ENCODE measurements at regions of chrX and their contacts with region 1.

Region 1: DNA sequence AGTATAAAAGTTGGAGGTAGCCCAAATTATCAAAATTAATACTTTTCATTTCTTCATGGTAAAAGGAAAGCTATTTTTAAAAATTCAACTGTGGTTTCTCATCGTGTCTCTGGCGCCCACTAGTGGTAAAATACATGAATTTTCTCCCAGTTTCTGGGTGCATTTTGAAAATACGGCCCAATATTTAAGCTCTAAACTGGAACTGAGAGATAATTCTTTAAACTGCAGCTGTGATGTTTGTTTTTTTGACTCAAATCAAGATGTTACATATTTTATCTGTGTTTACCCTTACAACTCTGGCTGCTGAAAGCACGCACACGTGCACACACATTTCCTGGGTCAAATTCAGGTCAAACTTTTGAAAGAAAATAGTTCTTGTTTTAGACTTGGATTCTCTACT is 123.9 kb upstream of the ACSL4 start:
- DNase-seq: no peak
- ATAC-seq: no peak
- H3K4me3 Mint-ChIP-seq: no peak overlapping the region
- H3K27ac Mint-ChIP-seq: no peak overlapping the region
- H3K4me1 Mint-ChIP-seq: peaks cover 5% of the 10 kb centered on the region
- H3K27me3 Mint-ChIP-seq: peaks cover 3% of the 10 kb centered on the region

Region 2: GRCh38 chrX:109485470-109486340 is 371.3 kb before region 1 on chrX:
- CTCF ChIA-PET with region 1: interaction called, 11 read pairs
- DNase-seq: peak; percentile 65
- ATAC-seq: peak; percentile 49
- H3K4me3 Mint-ChIP-seq: no peak overlapping the region
- H3K27ac Mint-ChIP-seq: no peak overlapping the region
- H3K4me1 Mint-ChIP-seq: peaks cover 2% of the 10 kb centered on the region
- H3K27me3 Mint-ChIP-seq: no peaks in the 10 kb centered on the region

Region 3: GRCh38 chrX:109714340-109714958 is 142.5 kb before region 1 on chrX:
- CTCF ChIA-PET with region 1: interaction called, 55 read pairs
- DNase-seq: no peak
- ATAC-seq: no peak
- H3K4me3 Mint-ChIP-seq: no peak overlapping the region
- H3K27ac Mint-ChIP-seq: no peak overlapping the region
- H3K4me1 Mint-ChIP-seq: peaks cover 28% of the 10 kb centered on the region
- H3K27me3 Mint-ChIP-seq: no peaks in the 10 kb centered on the region

Region 4: GRCh38 chrX:109830704-109831206 is 26.2 kb before region 1 on chrX:
- CTCF ChIA-PET with region 1: no interaction called
- DNase-seq: no peak
- ATAC-seq: no peak
- H3K4me3 Mint-ChIP-seq: no peak overlapping the region
- H3K27ac Mint-ChIP-seq: no peak overlapping the region
- H3K4me1 Mint-ChIP-seq: no peaks in the 10 kb centered on the region
- H3K27me3 Mint-ChIP-seq: peaks cover 6% of the 10 kb centered on the region